Activated CD8-positive, alpha-beta T cell treated with anti-CD3 and anti-CD28 coated beads, Interleukin-2, amount 10 ng/mL, durations not matched to agents 7 days and 5 days (primary cell): ENCODE measurements at regions of chr6 and their contacts with region 1.

Region 1: GRCh38 chr6:159726918-159727716 is at the start of gene WTAP:
- DNase-seq: peak; percentile 98
- ATAC-seq: peak; percentile 82
- H3K4me3 Mint-ChIP-seq: peak within 1 kb of the TSS; percentile 93
- H3K27ac Mint-ChIP-seq: peak within 1 kb of the TSS; percentile 98
- H3K4me1 Mint-ChIP-seq: peaks cover 51% of the 10 kb centered on the region
- H3K27me3 Mint-ChIP-seq: no peaks in the 10 kb centered on the region
- total RNA-seq, gene WTAP: 111 to 113 TPM

Region 2: GRCh38 chr6:159665868-159666635 is 61.1 kb before region 1 on chr6:
- CTCF ChIA-PET with region 1: no interaction called
- POLR2A ChIA-PET with region 1: no interaction called
- DNase-seq: no peak
- ATAC-seq: no peak
- H3K4me3 Mint-ChIP-seq: no peak overlapping the region
- H3K27ac Mint-ChIP-seq: no peak overlapping the region
- H3K4me1 Mint-ChIP-seq: no peaks in the 10 kb centered on the region
- H3K27me3 Mint-ChIP-seq: no peaks in the 10 kb centered on the region

Region 3: GRCh38 chr6:159739341-159739740 is 12.2 kb after region 1 on chr6:
- CTCF ChIA-PET with region 1: interaction called, 12 read pairs
- POLR2A ChIA-PET with region 1: interaction called, 12 read pairs
- DNase-seq: no peak
- ATAC-seq: no peak
- H3K4me3 Mint-ChIP-seq: no peak overlapping the region
- H3K27ac Mint-ChIP-seq: no peak overlapping the region
- H3K4me1 Mint-ChIP-seq: peaks cover 8% of the 10 kb centered on the region
- H3K27me3 Mint-ChIP-seq: no peaks in the 10 kb centered on the region

Region 4: DNA sequence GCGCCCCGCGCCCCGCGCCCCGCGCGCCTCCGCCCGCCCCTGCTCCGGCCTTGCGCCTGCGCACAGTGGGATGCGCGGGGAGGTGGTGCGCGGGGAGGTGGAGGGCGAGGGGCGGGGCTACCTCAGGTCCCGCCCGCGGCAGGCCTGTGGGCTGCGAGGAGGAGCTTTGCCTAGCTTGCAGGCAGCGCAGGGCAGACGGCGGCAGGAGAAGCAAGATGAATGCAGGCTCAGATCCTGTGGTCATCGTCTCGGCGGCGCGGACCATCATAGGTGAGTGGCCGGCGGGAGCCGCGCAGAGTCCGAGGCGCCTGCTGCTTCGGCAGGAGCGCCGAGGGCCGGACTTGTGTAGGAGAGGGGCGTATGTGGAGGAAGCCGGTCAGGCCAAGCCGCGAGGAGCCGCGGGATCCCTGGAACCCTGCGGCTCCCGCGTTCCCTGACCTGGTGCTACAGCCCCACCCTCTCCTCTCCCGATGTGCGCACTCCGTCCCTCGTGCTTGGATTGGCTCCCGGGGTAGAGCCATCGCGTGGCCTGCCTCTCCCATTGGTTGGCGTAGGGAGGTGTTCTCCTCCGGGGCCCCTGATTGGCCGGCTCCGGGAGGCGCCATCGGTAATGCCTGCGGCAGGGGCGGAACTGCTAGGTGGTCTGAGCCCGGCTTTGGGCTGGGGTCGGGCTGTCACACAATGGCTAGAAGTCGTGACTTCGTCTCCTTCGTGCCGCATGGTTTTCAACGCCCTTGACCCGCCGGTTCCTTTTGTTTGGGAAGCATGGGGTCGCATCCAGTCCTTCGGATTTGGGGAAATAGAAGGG is 35.0 kb after region 1 on chr6 and contains the start of gene ACAT2:
- CTCF ChIA-PET with region 1: interaction called, 4 read pairs
- POLR2A ChIA-PET with region 1: interaction called, 37 read pairs
- DNase-seq: peak; percentile 95
- ATAC-seq: peak; percentile 97
- H3K4me3 Mint-ChIP-seq: peak within 1 kb of the TSS; percentile 94
- H3K27ac Mint-ChIP-seq: peak within 1 kb of the TSS; percentile 96
- H3K4me1 Mint-ChIP-seq: peaks cover 39% of the 10 kb centered on the region
- H3K27me3 Mint-ChIP-seq: no peaks in the 10 kb centered on the region
- total RNA-seq, gene ACAT2: 84.4 to 89.2 TPM